ENCODE measurements at regions of chr16 and their contacts with region 1.

Region 1: GRCh38 chr16:60363566-60363965 is 1629.5 kb upstream of the GOT2 start:
- DNase-seq: no peak
- H3K4me3 ChIP-seq: no peak overlapping the region
- H3K27ac ChIP-seq: no peak overlapping the region
- H3K4me1 ChIP-seq: no peaks in the 10 kb centered on the region
- H3K27me3 ChIP-seq: no peaks in the 10 kb centered on the region
- CTCF ChIP-seq: no peak
- POLR2A ChIP-seq: no peak

Region 2: DNA sequence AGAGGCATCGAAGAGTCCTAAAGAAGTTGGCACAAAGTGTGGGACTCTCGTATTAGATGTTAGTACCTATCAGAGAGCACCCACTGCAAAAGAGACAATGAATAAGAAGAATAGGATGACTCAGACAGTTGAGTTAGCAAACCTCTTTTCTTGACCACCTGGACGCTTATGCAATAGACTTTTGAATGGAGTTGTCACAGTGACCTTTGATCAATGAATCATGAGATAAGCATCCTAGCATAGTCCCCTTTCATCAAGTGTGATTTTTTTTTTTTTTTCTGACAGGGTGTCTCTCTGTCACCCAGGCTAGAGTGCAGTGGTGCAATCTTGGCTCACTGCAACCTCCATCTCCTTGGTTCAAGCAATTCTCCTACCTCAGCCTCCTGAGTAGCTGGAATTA is 211.6 kb before region 1 on chr16:
- CTCF ChIA-PET with region 1: no interaction called
- POLR2A ChIA-PET with region 1: interaction called, 11 read pairs
- dilution Hi-C with region 1: no loop called
- intact Hi-C with region 1: no loop called
- DNase-seq: no peak
- H3K4me3 ChIP-seq: no peak overlapping the region
- H3K27ac ChIP-seq: no peak overlapping the region
- H3K4me1 ChIP-seq: no peaks in the 10 kb centered on the region
- H3K27me3 ChIP-seq: no peaks in the 10 kb centered on the region
- CTCF ChIP-seq: no peak
- POLR2A ChIP-seq: no peak

Region 3: GRCh38 chr16:60392380-60392779 is 28.8 kb after region 1 on chr16:
- CTCF ChIA-PET with region 1: no interaction called
- POLR2A ChIA-PET with region 1: no interaction called
- dilution Hi-C with region 1: no loop called
- intact Hi-C with region 1: no loop called
- DNase-seq: no peak
- H3K4me3 ChIP-seq: no peak overlapping the region
- H3K27ac ChIP-seq: no peak overlapping the region
- H3K4me1 ChIP-seq: no peaks in the 10 kb centered on the region
- H3K27me3 ChIP-seq: no peaks in the 10 kb centered on the region
- CTCF ChIP-seq: no peak
- POLR2A ChIP-seq: no peak

Measured in endothelial cell of umbilical vein (primary cell).